WTC11 (cell line): ENCODE measurements at regions of chr6 and their contacts with region 1.

Region 1: DNA sequence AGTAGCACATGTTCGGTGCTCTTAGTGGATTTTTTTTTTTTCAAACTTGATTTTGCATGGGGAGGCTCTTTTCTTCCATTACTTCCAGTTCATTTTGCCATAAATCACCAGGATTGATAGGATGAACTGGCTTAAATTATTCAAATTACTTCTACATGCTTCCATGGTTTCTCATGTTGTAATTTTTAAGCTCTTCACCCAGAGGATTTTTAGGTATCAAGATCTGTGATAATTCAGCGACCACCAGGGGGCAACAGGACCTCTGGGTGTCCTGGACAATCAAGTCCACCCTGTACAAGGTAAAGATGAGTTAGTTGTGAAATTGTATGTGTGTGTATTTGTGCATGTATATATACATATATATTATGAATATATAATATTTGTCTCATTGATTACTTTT is 4.2 kb upstream of the EPHA7 start:
- DNase-seq: peak; percentile 60
- ATAC-seq: no peak
- H3K4me3 Mint-ChIP-seq: no peak overlapping the region
- H3K27ac Mint-ChIP-seq: no peak overlapping the region
- H3K4me1 Mint-ChIP-seq: peaks cover 16% of the 10 kb centered on the region
- H3K27me3 Mint-ChIP-seq: peaks cover 10% of the 10 kb centered on the region; the same call in 1 of the 2 replicates
- CTCF ChIP-seq: peak; percentile 39; the same call in 1 of the 2 replicates

Region 2: GRCh38 chr6:93403390-93403789 is 20.2 kb before region 1 on chr6:
- CTCF ChIA-PET with region 1: interaction called, 10 read pairs
- POLR2A ChIA-PET with region 1: interaction called, 5 read pairs
- DNase-seq: no peak
- ATAC-seq: peak; percentile 65
- H3K4me3 Mint-ChIP-seq: no peak overlapping the region
- H3K27ac Mint-ChIP-seq: no peak overlapping the region
- H3K4me1 Mint-ChIP-seq: peaks cover 9% of the 10 kb centered on the region
- H3K27me3 Mint-ChIP-seq: no peaks in the 10 kb centered on the region; the same call in 1 of the 2 replicates
- CTCF ChIP-seq: no peak

Region 3: DNA sequence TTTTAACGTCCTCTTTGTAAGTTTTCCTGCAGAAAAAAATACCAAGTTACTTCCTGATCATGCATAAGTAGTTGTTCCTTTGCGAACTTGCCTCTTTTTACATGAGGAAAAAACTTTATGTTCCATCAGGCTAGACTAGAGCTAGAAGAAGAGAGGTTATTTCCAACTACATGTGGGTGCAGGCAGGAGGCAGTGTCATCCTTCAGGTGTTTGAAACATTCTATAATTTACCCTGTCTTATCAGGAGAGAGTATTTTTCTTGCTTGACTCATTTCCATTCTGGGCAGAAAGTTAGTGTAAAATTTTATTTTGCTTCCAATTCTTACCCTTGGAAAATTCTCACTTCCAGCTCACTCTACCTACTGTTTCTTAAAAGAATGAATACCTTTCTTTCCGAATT is 24.3 kb after region 1 on chr6:
- CTCF ChIA-PET with region 1: interaction called, 22 read pairs
- POLR2A ChIA-PET with region 1: no interaction called
- DNase-seq: no peak
- ATAC-seq: peak; percentile 44; the same call in 1 of the 2 replicates
- H3K4me3 Mint-ChIP-seq: no peak overlapping the region
- H3K27ac Mint-ChIP-seq: no peak overlapping the region
- H3K4me1 Mint-ChIP-seq: no peaks in the 10 kb centered on the region
- H3K27me3 Mint-ChIP-seq: no peaks in the 10 kb centered on the region
- CTCF ChIP-seq: no peak